ENCODE measurements at regions of chr19 and their contacts with region 1.

Region 1: DNA sequence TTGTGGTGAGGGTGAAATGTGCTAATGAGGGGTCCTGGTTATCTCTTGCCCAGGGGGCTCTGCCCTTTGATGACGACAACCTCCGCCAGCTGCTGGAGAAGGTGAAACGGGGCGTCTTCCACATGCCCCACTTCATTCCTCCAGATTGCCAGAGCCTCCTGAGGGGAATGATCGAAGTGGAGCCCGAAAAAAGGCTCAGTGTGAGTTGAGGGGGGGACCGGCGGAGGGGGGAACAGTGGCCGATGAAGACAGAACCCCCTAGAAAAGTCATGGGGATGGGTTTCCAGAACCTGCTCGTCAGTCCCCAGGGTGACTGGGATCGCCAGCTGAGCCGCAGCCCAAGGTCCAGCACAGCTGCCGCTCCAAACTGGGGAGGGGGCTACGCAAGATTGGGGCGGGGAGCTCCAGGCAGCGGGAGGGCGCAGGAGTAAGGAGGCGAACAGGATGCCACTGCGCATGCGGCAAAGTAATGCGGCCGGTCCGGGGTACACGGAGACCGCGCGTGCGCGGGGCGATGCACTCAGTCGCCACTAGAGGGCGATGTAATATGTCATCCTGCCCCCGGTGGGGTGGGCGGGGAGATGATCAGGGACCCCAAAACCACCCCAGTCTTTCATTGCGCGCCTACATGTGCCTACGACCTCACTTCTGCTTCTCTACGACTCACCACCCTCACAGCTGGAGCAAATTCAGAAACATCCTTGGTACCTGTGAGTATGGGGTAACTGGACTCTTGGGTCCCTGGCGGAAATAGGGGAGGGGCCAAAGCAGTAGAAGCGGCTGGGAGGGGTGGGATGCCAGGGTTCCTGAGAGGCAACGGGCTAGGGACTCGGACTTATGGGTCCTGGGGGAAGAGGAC is 17.9 kb downstream of the BRSK1 start:
- DNase-seq: peak; percentile 95
- ATAC-seq: peak; percentile 89

Region 2: DNA sequence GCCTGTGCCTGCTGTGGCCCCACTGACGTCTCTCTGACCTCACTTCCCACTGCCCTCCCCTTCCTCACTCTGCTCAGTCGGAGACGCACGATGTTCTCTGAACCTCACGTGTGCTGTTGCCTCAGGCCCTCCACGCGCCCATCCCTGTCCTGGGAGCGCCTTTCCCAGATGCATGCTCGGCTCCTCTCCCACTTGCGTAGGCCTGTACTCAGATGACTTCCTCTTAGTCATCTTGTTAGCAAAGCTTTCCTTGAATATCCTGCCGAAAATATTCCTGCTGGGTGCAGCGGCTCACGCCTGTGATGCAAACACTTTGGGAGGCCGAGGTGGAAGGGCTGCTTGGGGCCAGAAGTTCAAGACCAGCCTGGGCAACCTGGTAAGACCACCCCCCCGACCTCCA is 112.3 kb before region 1 on chr19:
- intact Hi-C with region 1: no loop called
- DNase-seq: no peak
- ATAC-seq: peak; percentile 44

Region 3: DNA sequence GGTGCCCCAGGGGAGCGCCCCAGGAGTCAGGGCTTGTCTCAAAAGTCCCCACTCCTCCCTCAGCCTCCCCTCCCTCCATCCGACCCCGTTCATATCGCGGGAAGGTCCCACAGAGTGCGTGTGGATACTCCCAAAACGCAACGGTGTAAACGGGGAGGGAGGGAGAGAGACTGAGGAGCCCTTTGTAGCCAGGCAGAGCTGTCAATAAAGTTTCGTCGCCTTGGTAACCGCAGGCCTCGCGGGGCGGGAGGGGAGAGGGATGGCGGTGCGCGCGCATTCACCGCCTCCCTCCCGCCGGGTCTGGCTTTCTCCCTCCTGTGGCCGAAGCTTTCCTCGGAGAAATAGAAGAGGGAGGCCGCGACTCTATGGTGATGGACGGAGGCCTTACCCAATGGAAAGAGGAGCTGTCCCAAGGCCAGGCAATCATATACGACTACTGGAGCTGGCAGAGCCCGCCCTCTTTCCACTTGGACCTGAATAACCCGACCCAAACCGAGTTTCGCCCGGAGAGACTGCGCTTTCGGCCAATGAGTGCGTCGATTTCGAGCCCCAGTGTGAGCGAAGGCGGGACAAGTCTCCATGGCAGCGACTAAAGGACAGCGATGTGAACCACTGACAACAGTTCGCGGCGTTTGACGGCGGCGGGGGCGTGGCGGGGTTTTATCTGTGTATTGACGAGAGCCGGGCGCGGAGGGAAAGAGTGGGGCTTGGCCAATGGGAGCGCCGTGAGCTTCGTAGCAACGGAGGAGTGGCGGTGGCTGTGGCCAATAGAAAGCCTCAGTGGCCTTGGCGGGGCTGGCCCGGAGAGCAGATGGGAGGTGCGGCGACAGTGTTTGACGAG is 37.6 kb after region 1 on chr19 and contains the start of gene KMT5C:
- intact Hi-C with region 1: loop called (anchors 5 kb)
- DNase-seq: peak; percentile 100
- ATAC-seq: peak; percentile 95
- total RNA-seq, gene KMT5C: 6.2 TPM

Region 4: GRCh38 chr19:55418185-55418584 is 116.5 kb after region 1 on chr19:
- intact Hi-C with region 1: loop called (anchors 10 kb)
- DNase-seq: no peak
- ATAC-seq: peak; percentile 88

Measured in Right ventricle myocardium inferior (tissue), 1 donor.